Activated CD4-positive, alpha-beta memory T cell treated with anti-CD3 and anti-CD28 coated beads for 36 hours (primary cell): ENCODE measurements at regions of chr1 and their contacts with region 1.

Region 1: GRCh38 chr1:95043141-95043980 is 29.4 kb downstream of the ALG14 start:
- DNase-seq: peak; percentile 86
- H3K4me3 Mint-ChIP-seq: no peak overlapping the region
- H3K27ac Mint-ChIP-seq: no peak overlapping the region
- H3K4me1 Mint-ChIP-seq: no peaks in the 10 kb centered on the region
- H3K27me3 Mint-ChIP-seq: no peaks in the 10 kb centered on the region

Region 2: DNA sequence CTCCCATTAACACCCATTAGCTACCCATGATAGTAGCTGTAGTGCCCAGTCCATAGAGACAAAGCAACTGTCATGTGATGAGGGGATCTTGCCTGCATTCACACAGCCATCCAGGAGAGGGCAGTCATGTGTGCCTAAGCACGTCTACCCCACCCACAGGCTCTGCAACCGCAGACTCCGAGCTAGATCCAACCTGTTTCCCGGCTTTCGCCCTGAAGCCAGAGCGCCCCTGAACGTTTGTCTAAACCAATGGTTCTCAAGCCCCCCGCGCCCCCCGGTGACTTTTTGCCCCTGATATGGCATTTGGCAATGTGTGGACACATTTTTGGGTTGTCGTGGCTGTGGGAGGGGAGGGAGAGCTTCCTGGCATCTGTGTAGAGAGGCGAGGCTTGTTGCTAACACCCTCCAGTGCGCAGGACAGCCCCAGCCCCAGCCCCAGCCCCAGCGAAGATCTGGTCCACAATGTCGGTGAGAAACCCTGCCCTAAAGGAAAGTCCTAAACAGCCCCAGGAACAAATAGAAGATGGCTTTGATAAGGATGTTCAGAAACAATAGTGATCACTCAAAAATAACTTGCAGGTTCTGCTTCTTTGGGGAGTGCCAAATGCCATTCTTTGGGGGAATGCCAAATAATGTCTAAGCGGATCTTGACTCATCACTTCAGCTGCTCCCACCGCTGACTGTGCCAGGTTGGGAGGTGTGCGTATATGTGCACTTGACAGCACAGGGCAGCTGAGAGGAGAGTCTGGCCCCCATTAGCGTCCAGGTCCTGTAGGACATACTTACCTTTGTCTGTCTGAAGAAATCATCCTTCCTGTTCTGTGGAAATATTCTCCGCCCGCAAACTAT is 188.7 kb before region 1 on chr1:
- CTCF ChIA-PET with region 1: interaction called, 180 read pairs
- POLR2A ChIA-PET with region 1: no interaction called
- intact Hi-C with region 1: loop called (anchors 1 kb)
- DNase-seq: peak; percentile 86
- H3K4me3 Mint-ChIP-seq: no peak overlapping the region
- H3K27ac Mint-ChIP-seq: no peak overlapping the region
- H3K4me1 Mint-ChIP-seq: no peaks in the 10 kb centered on the region
- H3K27me3 Mint-ChIP-seq: peaks cover 1% of the 10 kb centered on the region

Region 3: DNA sequence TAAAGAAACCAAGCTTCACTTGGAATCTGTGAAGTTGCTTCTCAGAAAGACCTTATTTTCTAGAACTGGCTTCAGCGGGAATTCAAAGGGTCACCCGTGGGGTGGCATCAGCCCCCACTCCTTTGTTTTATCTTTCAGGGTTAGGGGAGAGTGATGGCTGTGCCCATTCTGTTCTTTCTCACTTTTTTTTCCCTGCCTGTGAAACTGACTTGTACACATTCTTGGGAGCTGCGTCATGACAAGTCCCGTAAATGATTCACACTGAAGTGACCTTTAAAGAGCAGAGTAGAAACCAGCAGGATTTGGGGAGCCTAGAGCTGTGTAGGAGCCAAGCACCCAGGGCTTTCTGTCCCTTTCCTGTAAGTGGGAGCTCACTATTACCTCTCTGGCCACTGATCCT is 179.4 kb before region 1 on chr1:
- CTCF ChIA-PET with region 1: interaction called, 17 read pairs
- POLR2A ChIA-PET with region 1: no interaction called
- intact Hi-C with region 1: no loop called
- DNase-seq: no peak
- H3K4me3 Mint-ChIP-seq: no peak overlapping the region
- H3K27ac Mint-ChIP-seq: no peak overlapping the region
- H3K4me1 Mint-ChIP-seq: no peaks in the 10 kb centered on the region
- H3K27me3 Mint-ChIP-seq: no peaks in the 10 kb centered on the region

Region 4: DNA sequence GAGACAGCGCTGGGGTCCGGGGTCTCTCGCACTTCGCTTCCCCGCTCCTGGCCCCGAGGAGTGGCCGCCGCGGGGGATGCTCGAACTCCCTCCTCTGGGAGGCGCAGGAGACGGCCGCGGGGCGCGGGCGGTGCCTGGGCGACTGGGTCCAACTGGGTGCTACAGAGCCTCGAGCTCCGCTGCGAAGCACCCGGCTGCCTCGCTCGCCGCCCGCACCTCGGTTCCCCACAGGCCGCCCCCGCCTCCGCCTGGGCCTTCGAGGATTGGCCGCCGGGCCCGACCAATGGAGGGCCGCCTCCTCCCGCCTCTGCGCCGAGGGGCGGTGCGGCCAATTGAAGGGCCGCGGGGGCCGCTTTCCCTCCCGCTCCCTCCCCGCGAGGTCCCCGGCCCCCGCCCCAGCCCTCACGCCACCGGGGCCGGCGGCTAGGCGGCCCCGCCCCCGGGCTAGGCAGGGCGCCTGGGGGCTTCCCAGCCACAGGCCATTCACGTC is 116.4 kb before region 1 on chr1 and contains the start of gene CNN3:
- CTCF ChIA-PET with region 1: interaction called, 3 read pairs
- POLR2A ChIA-PET with region 1: no interaction called
- intact Hi-C with region 1: loop called (anchors 5 kb)
- DNase-seq: peak; percentile 77
- H3K4me3 Mint-ChIP-seq: peak within 1 kb of the TSS; percentile 74
- H3K27ac Mint-ChIP-seq: no peak within 1 kb of the TSS
- H3K4me1 Mint-ChIP-seq: peaks cover 14% of the 10 kb centered on the region
- H3K27me3 Mint-ChIP-seq: peaks cover 29% of the 10 kb centered on the region
- total RNA-seq, gene CNN3: 3.9 to 4.6 TPM

Region 5: GRCh38 chr1:94962409-94963265 is 80.7 kb before region 1 on chr1:
- CTCF ChIA-PET with region 1: interaction called, 3 read pairs
- POLR2A ChIA-PET with region 1: no interaction called
- intact Hi-C with region 1: loop called (anchors 5 kb)
- DNase-seq: peak; percentile 28
- H3K4me3 Mint-ChIP-seq: peak overlapping the region; percentile 83
- H3K27ac Mint-ChIP-seq: peak overlapping the region; percentile 88
- H3K4me1 Mint-ChIP-seq: peaks cover 6% of the 10 kb centered on the region
- H3K27me3 Mint-ChIP-seq: no peaks in the 10 kb centered on the region

Region 6: GRCh38 chr1:95098196-95098595 is 54.8 kb after region 1 on chr1:
- CTCF ChIA-PET with region 1: no interaction called
- POLR2A ChIA-PET with region 1: no interaction called
- intact Hi-C with region 1: no loop called
- DNase-seq: no peak
- H3K4me3 Mint-ChIP-seq: no peak overlapping the region
- H3K27ac Mint-ChIP-seq: no peak overlapping the region
- H3K4me1 Mint-ChIP-seq: no peaks in the 10 kb centered on the region
- H3K27me3 Mint-ChIP-seq: no peaks in the 10 kb centered on the region

Region 7: DNA sequence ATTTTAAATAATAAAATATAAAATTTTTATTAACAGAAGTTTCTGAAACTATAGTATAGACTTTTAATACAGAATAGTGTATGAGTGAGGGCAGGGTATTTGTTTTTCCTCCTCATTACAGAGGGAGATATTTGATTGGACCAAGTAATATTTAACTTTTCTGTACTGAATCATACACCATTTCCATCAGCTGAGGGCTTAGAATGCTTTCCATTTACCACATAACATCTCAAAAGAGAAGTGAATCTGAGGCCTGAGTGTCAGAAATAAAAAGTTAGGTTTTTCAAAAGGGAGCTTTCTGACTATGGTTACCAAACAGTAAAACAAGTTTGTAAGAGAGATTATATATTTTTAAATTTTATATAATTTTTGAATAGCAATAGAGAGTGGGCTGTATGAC is 103.3 kb after region 1 on chr1:
- CTCF ChIA-PET with region 1: no interaction called
- POLR2A ChIA-PET with region 1: no interaction called
- intact Hi-C with region 1: no loop called
- DNase-seq: no peak
- H3K4me3 Mint-ChIP-seq: no peak overlapping the region
- H3K27ac Mint-ChIP-seq: no peak overlapping the region
- H3K4me1 Mint-ChIP-seq: no peaks in the 10 kb centered on the region
- H3K27me3 Mint-ChIP-seq: peaks cover 2% of the 10 kb centered on the region